Dendritic cell treated with granulocyte-macrophage colony-stimulating factor and Interleukin-4, amounts not matched to agents 40 ng/mL and 50 ng/mL, for 4 days (primary cell): ENCODE measurements at regions of chr7 and their contacts with region 1.

Region 1: DNA sequence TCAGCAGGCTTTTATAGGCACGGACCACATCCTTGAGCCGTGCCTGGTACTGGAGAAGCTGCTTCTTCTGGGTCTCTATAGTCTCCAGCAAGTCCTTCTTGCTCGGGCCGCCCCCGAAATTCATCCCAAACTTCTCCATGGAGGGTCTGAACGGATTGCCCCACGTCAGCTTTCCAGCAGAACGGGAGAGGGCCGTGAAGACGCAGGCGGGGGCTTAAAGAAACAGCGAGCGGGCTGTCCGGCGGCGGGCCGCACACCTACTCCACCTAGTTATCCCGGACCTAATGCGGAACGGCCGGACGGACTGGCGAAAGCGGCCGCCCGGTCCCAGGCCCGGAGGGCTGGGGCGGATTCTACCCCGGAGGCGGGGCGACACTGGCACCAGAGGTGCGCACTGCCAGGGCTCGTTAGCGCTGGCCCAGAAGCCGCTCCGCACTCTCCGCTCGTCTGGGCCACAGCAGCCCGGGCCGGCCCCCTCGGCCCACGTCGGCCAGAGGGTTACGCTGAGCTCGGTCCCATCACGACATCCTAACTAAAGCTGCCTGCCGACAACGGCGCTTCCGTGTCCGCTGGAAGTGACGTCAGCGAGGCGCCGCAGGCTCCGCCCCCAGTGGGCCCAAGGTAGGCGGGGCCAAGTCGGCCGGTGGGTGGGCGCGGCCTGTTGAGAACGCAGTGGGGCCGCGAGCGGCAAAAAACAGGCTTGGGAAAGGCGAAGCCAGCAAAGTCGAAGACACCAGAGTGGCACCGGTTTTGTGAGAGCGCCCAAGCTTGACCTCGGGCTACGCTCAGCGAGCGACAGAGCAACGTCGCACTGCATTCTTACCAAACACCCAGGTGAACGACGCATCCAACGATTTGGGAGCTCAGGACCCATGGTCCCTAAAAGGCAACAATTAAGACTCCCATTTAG is at the start of gene GCC1:
- H3K4me3 Mint-ChIP-seq: peak within 1 kb of the TSS; percentile 95
- H3K27ac Mint-ChIP-seq: peak within 1 kb of the TSS; percentile 95
- H3K4me1 Mint-ChIP-seq: peaks cover 58% of the 10 kb centered on the region
- H3K27me3 Mint-ChIP-seq: no peaks in the 10 kb centered on the region

Region 2: DNA sequence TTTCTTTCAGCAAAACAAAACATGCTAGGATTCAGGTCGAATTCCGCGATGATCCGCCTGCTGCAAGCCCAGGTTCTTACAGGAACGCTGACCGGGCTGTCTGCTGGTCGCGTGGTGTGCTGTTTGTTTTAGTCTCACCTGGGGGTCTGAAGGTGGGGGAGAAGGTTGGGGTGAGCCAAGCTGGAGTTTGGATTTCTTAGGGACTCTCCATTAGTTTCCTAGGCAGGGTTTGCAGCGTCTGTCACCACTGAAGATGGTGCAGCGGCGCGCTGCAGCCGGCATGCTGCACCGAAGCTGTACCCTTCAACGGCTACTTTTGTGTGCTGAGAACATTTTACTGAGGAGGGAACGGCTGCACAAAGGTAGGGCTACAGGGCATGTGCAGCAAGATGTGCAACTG is 48.6 kb before region 1 on chr7:
- intact Hi-C with region 1: no loop called
- H3K4me3 Mint-ChIP-seq: no peak overlapping the region
- H3K27ac Mint-ChIP-seq: no peak overlapping the region
- H3K4me1 Mint-ChIP-seq: no peaks in the 10 kb centered on the region
- H3K27me3 Mint-ChIP-seq: peaks cover 44% of the 10 kb centered on the region

Region 3: GRCh38 chr7:127651556-127652332 is 66.4 kb after region 1 on chr7 and contains the start of gene SND1:
- intact Hi-C with region 1: loop called (anchors 1 kb)
- H3K4me3 Mint-ChIP-seq: peak within 1 kb of the TSS; percentile 95
- H3K27ac Mint-ChIP-seq: peak within 1 kb of the TSS; percentile 95
- H3K4me1 Mint-ChIP-seq: peaks cover 44% of the 10 kb centered on the region
- H3K27me3 Mint-ChIP-seq: no peaks in the 10 kb centered on the region

Region 4: GRCh38 chr7:127809261-127809702 is 224.0 kb after region 1 on chr7:
- intact Hi-C with region 1: no loop called
- H3K4me3 Mint-ChIP-seq: no peak overlapping the region
- H3K27ac Mint-ChIP-seq: no peak overlapping the region
- H3K4me1 Mint-ChIP-seq: peaks cover 17% of the 10 kb centered on the region
- H3K27me3 Mint-ChIP-seq: no peaks in the 10 kb centered on the region

Region 5: DNA sequence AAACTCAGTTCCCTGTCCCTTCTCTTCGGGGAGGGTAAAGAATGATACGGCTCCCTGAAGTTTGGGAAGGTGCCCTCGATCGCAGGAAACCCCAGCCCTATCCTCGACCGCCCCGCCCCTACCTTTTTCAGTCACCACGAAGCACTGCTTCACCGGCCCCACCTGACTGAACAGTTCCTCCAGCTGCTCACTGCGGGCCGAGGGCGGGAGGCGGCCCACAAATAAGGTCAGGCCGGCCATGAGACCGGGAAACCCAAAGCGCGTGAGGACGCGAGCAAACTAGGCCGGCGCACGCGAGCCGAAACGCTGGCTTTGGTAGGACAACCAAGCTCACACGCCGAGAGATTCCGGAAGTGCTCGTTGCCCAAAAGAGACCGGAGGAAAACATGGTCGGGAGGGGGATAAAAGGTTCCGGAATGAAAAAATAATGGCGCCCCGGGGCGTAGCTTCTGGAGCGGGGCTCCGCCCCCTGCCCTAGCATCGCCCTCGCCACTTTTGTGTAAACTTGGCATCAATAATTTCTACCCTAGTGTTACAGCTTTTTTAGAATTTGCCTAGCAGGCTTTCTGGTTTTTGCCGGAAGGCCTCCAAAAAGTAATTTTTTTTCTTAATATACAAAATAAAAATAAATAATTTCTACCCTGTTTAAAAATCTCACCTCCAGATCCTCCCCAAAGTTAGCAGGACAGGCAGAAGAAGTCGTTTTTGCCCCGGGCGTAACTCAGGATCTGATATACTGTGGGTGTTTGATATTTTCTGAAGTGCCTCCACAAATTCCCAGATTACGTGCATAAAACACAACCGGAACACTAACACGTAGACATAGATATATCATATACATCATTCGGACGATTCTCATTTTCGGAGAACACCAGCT is 758.5 kb after region 1 on chr7 and contains the start of gene RBM28:
- intact Hi-C with region 1: loop called (anchors 5 kb)
- H3K4me3 Mint-ChIP-seq: peak within 1 kb of the TSS; percentile 95
- H3K27ac Mint-ChIP-seq: peak within 1 kb of the TSS; percentile 97
- H3K4me1 Mint-ChIP-seq: peaks cover 14% of the 10 kb centered on the region
- H3K27me3 Mint-ChIP-seq: peaks cover 7% of the 10 kb centered on the region